ENCODE measurements at regions of chr6 and their contacts with region 1.

Region 1: GRCh38 chr6:52826513-52826912 is 14.1 kb downstream of the GSTA5 start:
- DNase-seq: no peak
- ATAC-seq: no peak
- H3K4me3 Mint-ChIP-seq: no peak overlapping the region
- H3K27ac Mint-ChIP-seq: no peak overlapping the region
- H3K4me1 Mint-ChIP-seq: no peaks in the 10 kb centered on the region
- H3K27me3 Mint-ChIP-seq: peaks cover 7% of the 10 kb centered on the region
- CTCF ChIP-seq: no peak

Region 2: DNA sequence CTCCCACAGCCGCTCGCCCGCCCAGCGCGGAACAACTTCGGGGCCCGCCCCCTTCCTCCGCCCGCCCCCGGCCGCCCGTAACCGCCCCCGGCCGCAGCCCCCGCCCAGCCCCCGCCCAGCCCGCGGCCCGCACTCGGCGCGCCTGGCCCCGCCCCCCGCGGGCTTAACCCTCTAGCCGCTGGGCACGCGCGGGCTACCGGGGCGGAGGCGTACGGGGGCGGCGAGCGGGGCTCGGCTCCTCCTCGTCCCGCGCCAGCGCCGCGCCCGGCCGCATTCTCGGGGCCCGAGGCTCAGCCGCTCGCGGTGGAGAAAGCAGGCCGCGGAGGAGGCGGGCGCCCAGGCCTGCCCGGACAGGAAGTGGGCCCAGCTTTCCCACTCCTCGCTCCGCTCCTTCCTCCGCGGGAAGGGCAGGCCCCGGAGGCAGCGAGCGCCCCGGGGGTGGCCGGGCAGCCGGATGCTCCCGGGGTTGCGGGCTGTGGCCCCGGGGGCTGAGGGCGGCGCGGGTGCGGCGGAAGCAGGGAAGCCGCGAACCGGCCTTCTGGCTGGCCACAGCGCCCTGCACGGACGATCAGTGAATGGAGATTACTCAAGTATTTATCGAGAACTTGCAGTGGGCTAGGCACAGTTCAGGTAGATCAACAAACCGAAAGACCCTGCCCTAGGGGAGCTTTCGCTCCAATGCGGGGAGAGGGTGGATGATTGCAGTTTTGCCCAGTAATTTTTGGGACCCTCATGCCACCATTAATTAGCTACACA is 249.3 kb before region 1 on chr6 and contains the start of gene TRAM2:
- CTCF ChIA-PET with region 1: no interaction called
- POLR2A ChIA-PET with region 1: no interaction called
- intact Hi-C with region 1: no loop called
- DNase-seq: peak; percentile 61
- ATAC-seq: peak; percentile 60
- H3K4me3 Mint-ChIP-seq: peak within 1 kb of the TSS; percentile 78
- H3K27ac Mint-ChIP-seq: peak within 1 kb of the TSS; percentile 73
- H3K4me1 Mint-ChIP-seq: peaks cover 31% of the 10 kb centered on the region
- H3K27me3 Mint-ChIP-seq: no peaks in the 10 kb centered on the region
- CTCF ChIP-seq: no peak
- total RNA-seq, gene TRAM2: 0.94 to 1.0 TPM

Region 3: GRCh38 chr6:52787917-52788316 is 38.6 kb before region 1 on chr6:
- CTCF ChIA-PET with region 1: no interaction called
- POLR2A ChIA-PET with region 1: interaction called, 3 read pairs
- intact Hi-C with region 1: loop called (anchors 2 kb)
- DNase-seq: no peak
- ATAC-seq: no peak
- H3K4me3 Mint-ChIP-seq: no peak overlapping the region
- H3K27ac Mint-ChIP-seq: no peak overlapping the region
- H3K4me1 Mint-ChIP-seq: no peaks in the 10 kb centered on the region
- H3K27me3 Mint-ChIP-seq: peaks cover 5% of the 10 kb centered on the region
- CTCF ChIP-seq: no peak

Measured in activated CD8-positive, alpha-beta T cell treated with anti-CD3 and anti-CD28 coated beads for 36 hours (primary cell).